ENCODE measurements at regions of chr19 and their contacts with region 1.

Region 1: GRCh38 chr19:39494661-39495060 is 4.1 kb upstream of the DLL3 start:
- DNase-seq: no peak
- ATAC-seq: no peak
- H3K4me3 ChIP-seq: no peak overlapping the region
- H3K27ac ChIP-seq: no peak overlapping the region
- H3K4me1 ChIP-seq: peaks cover 20% of the 10 kb centered on the region
- H3K27me3 ChIP-seq: peaks cover 4% of the 10 kb centered on the region
- CTCF ChIP-seq: no peak

Region 2: DNA sequence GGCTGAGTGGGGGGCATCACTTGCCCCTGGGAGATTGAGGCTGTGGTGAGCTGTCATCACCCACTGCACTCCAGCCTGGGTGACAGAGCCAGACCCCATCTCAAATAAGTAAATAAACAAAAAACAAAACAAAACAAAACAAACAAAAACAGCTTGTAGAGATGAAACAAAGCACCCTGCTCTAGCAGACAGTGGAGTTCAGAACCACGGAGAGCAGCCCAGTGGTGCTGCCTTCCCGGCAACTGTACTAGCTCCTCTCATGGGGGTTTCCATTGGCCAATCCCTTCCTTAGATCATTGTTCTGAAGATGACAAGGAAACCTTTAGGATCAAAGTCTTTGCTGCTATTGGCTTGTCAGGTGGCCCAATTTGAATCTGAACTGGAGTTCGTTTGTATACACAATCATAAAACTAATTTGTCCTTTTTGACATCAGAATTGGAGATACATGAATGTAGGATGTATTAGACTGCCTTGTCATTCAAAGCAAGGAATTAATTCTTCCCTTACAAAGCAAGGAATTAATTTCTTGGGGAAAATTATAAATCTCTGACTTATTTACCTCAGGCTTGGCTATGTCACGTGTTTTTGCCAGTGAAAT is 270.9 kb before region 1 on chr19:
- CTCF ChIA-PET with region 1: no interaction called
- POLR2A ChIA-PET with region 1: no interaction called
- in situ Hi-C with region 1: no loop called
- intact Hi-C with region 1: no loop called
- DNase-seq: no peak
- ATAC-seq: peak; percentile 40; the same call in 1 of the 2 replicates
- H3K4me3 ChIP-seq: no peak overlapping the region
- H3K27ac ChIP-seq: no peak overlapping the region
- H3K4me1 ChIP-seq: no peaks in the 10 kb centered on the region
- H3K27me3 ChIP-seq: peaks cover 17% of the 10 kb centered on the region
- CTCF ChIP-seq: no peak

Region 3: DNA sequence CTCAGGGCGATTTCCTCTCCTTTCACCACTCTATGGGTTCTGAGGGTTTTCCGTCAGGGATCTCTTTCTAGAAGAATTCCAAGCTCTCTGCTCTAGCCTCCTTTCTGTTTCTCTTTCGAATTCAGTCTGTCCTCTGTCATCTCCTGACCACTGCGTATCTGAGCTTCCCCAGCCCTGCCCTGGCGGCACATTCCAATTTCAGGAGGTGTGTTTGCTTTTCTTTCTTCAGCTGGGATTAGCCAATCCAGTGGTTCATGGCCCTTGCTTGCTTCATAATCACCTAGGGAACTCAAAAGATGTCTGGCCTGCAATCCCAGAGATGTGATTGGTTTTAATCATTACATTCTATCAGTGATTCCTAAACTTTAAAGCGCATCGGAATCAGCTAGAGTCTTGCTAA is 217.0 kb before region 1 on chr19:
- CTCF ChIA-PET with region 1: interaction called, 10 read pairs
- POLR2A ChIA-PET with region 1: no interaction called
- in situ Hi-C with region 1: no loop called
- intact Hi-C with region 1: no loop called
- DNase-seq: no peak
- ATAC-seq: peak; percentile 27
- H3K4me3 ChIP-seq: no peak overlapping the region
- H3K27ac ChIP-seq: no peak overlapping the region
- H3K4me1 ChIP-seq: no peaks in the 10 kb centered on the region
- H3K27me3 ChIP-seq: peaks cover 8% of the 10 kb centered on the region; the same call in 1 of the 2 replicates
- CTCF ChIP-seq: no peak

Region 4: GRCh38 chr19:39381910-39382611 is 112.6 kb before region 1 on chr19:
- CTCF ChIA-PET with region 1: no interaction called
- POLR2A ChIA-PET with region 1: no interaction called
- in situ Hi-C with region 1: no loop called
- intact Hi-C with region 1: no loop called
- DNase-seq: no peak
- ATAC-seq: 0 out of 2 replicates have a peak, but pooled peaks have one; percentile 4
- H3K4me3 ChIP-seq: no peak overlapping the region
- H3K27ac ChIP-seq: no peak overlapping the region
- H3K4me1 ChIP-seq: peaks cover 21% of the 10 kb centered on the region
- H3K27me3 ChIP-seq: no peaks in the 10 kb centered on the region
- CTCF ChIP-seq: no peak

Region 5: DNA sequence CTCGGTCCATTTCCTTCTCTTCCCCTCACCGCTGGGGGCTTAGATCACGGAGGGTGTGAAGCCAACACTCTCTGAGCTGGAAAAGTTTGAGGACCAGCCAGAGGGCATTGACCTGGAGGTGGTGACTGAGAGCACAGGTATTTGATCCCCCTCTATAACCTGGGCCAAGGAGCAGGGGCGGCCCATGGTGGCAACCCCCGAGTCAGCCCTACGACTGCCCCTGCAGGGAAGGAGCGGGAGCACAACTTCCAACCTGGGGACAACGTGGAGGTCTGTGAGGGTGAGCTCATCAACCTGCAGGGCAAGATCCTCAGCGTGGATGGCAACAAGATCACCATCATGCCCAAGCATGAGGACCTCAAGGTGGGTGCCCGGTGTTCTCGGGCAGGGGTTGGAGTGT is 25.6 kb before region 1 on chr19:
- CTCF ChIA-PET with region 1: interaction called, 89 read pairs
- POLR2A ChIA-PET with region 1: interaction called, 11 read pairs
- in situ Hi-C with region 1: no loop called
- intact Hi-C with region 1: no loop called
- DNase-seq: no peak
- ATAC-seq: no peak
- H3K4me3 ChIP-seq: no peak overlapping the region
- H3K27ac ChIP-seq: no peak overlapping the region
- H3K4me1 ChIP-seq: no peaks in the 10 kb centered on the region
- H3K27me3 ChIP-seq: no peaks in the 10 kb centered on the region
- CTCF ChIP-seq: no peak

Region 6: GRCh38 chr19:39480337-39481228 is 14.1 kb before region 1 on chr19 and contains the start of gene TIMM50:
- CTCF ChIA-PET with region 1: interaction called, 89 read pairs
- POLR2A ChIA-PET with region 1: interaction called, 20 read pairs
- in situ Hi-C with region 1: no loop called
- intact Hi-C with region 1: no loop called
- DNase-seq: peak; percentile 100
- ATAC-seq: peak; percentile 96
- H3K4me3 ChIP-seq: peak within 1 kb of the TSS; percentile 39 to 55
- H3K27ac ChIP-seq: peak within 1 kb of the TSS; percentile 86
- H3K4me1 ChIP-seq: peaks cover 23% of the 10 kb centered on the region
- H3K27me3 ChIP-seq: no peaks in the 10 kb centered on the region
- CTCF ChIP-seq: no peak
- total RNA-seq, gene TIMM50: 1,837 TPM

Region 7: GRCh38 chr19:39590265-39590664 is 95.6 kb after region 1 on chr19:
- CTCF ChIA-PET with region 1: interaction called, 15 read pairs
- POLR2A ChIA-PET with region 1: no interaction called
- in situ Hi-C with region 1: no loop called
- intact Hi-C with region 1: no loop called
- DNase-seq: no peak
- ATAC-seq: no peak
- H3K4me3 ChIP-seq: no peak overlapping the region
- H3K27ac ChIP-seq: no peak overlapping the region
- H3K4me1 ChIP-seq: no peaks in the 10 kb centered on the region
- H3K27me3 ChIP-seq: peaks cover 77% of the 10 kb centered on the region
- CTCF ChIP-seq: peak; percentile 33; the same call in 1 of the 2 replicates

Region 8: GRCh38 chr19:39765091-39766076 is 270.7 kb after region 1 on chr19:
- CTCF ChIA-PET with region 1: no interaction called
- POLR2A ChIA-PET with region 1: no interaction called
- in situ Hi-C with region 1: no loop called
- intact Hi-C with region 1: no loop called
- DNase-seq: peak; percentile 89
- ATAC-seq: peak; percentile 76
- H3K4me3 ChIP-seq: no peak overlapping the region
- H3K27ac ChIP-seq: no peak overlapping the region
- H3K4me1 ChIP-seq: no peaks in the 10 kb centered on the region
- H3K27me3 ChIP-seq: peaks cover 42% of the 10 kb centered on the region
- CTCF ChIP-seq: no peak

Measured in Panc1 (cell line).